AG04449 (cell line): ENCODE measurements at regions of chr10 and their contacts with region 1.

Region 1: GRCh38 chr10:12214763-12215218 is 18.8 kb downstream of the CDC123 start:
- DNase-seq: no peak
- H3K4me3 ChIP-seq: no peak overlapping the region
- CTCF ChIP-seq: peak; percentile 17

Region 2: DNA sequence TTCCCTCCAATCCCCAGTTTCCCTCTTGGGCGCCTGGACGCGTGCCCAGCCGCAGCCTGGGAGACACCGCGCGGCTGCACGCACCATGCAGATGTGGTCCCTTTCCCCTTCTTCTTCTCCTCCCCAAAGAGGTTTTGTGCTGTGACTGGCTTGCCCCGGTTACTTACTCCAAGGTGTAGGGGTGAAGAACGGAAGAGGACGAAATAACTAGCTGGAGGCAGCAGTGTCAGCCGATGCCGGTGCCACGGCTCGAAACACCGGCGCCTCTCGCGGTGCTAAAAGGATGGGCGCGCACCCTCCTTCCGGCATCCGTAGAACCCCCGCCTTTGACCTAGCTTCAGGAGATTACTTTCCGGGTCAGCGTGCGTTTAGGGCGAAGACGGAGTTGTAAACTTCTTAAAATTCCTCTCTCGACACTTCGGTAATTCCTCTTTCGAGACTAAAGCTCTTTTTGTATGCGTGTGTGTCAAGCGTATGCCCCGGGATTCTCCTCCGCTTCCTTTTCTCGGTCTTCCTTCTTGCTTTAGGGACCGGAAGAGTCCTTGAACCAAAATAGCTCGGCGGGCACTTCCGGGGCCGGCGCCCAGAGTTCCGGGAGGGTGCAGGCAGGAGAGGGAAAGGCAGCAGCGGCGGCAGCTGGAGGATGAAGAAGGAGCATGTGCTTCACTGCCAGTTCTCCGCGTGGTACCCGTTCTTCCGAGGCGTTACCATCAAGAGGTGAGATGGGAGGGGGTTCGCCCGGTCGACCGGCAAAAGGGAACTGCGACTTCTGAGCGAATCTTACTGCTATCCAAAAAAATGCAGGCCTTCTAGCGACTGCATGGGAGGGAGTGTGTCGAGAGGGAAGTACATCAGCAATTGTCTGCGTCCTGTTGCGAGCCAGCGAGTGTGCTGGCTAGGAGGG is 18.9 kb before region 1 on chr10 and contains the starts of genes CDC123 and NUDT5:
- CTCF ChIA-PET with region 1: interaction called, 156 read pairs
- POLR2A ChIA-PET with region 1: no interaction called
- DNase-seq: no peak
- H3K4me3 ChIP-seq: peak within 1 kb of the TSS; percentile 99
- CTCF ChIP-seq: peak; percentile 18

Region 3: DNA sequence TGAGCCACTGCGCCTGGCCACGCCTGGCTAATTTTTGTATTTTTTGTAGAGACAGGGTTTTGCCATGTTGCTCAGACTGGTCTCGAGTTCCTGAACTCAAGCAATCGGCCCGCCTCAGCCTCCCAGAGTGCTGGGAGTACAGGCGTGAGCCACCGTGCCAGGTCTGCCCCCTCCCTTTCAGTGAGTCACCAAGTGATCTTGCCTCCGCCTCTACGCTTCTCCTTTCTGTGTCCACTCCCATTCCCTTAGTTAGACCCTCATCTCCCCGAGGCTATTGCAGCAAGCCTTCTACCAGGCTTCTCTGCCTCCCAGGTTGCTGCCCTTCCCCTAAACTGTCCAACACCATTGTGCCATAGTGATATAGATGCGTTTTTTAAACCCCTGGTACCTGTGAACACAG is 14.1 kb after region 1 on chr10:
- CTCF ChIA-PET with region 1: interaction called, 53 read pairs
- POLR2A ChIA-PET with region 1: no interaction called
- DNase-seq: no peak
- H3K4me3 ChIP-seq: no peak overlapping the region
- CTCF ChIP-seq: no peak

Region 4: DNA sequence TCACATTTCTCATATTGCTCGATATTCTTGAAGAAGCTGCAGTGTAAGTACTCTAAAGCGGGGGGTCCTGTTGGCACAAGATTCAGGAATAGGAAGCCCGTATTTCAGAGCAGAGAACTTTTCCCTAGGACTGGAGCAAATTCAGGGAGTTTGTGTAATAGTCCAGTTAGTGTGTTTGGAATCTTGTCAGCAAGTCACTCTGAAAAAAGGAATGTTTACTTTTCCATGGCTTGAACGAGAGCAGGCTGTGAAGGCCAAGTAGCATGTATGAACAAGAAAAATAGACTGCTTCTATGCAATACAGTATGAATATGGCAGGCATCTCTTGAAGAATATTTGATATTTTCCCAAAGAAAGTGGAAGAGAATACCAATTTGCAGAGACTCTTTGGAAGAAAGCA is 21.0 kb after region 1 on chr10:
- CTCF ChIA-PET with region 1: interaction called, 15 read pairs
- POLR2A ChIA-PET with region 1: no interaction called
- DNase-seq: no peak
- H3K4me3 ChIP-seq: no peak overlapping the region
- CTCF ChIP-seq: no peak

Region 5: DNA sequence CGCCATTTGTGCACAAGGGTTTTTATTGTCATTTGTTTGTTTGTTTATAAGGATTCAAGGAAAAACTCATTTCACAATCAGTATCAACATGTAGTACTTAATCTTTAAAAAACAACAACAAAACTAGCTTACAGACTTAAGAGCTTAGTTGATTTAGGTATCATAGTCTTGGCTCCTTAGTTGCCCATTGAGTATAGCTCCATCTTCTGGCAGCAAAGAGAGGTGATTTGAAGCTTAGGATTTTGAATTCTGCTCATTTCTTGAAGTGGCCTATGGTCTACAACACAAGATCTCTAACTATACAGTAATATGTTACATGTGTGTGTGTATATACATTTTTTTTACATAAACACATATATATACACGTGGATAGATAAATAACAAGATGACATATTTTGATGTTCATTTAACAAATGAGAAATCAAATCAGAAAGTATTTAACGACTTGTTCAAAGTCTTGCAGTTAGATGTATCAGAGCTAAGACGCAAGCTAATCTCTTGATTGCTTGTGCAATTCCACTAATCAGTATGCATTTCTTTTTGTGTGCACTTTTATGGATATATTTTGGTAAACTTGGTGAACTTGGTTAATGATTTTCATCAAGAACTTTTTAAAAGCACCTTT is 441.8 kb after region 1 on chr10:
- CTCF ChIA-PET with region 1: interaction called, 37 read pairs
- POLR2A ChIA-PET with region 1: no interaction called
- DNase-seq: peak; percentile 29
- H3K4me3 ChIP-seq: no peak overlapping the region
- CTCF ChIP-seq: peak; percentile 48

Region 6: GRCh38 chr10:13074561-13075451 is 860.0 kb after region 1 on chr10:
- CTCF ChIA-PET with region 1: interaction called, 29 read pairs
- POLR2A ChIA-PET with region 1: no interaction called
- DNase-seq: no peak
- H3K4me3 ChIP-seq: no peak overlapping the region
- CTCF ChIP-seq: peak; percentile 86